ENCODE measurements at regions of chr2 and their contacts with region 1.

Region 1: GRCh38 chr2:84649487-84650142 is 133.3 kb downstream of the DNAH6 start:
- DNase-seq: no peak
- ATAC-seq: no peak
- H3K4me3 ChIP-seq: no peak overlapping the region
- H3K27ac ChIP-seq: no peak overlapping the region
- H3K4me1 ChIP-seq: no peaks in the 10 kb centered on the region
- H3K27me3 ChIP-seq: peaks cover 5% of the 10 kb centered on the region
- CTCF ChIP-seq: no peak

Region 2: GRCh38 chr2:84556190-84556589 is 93.4 kb before region 1 on chr2:
- CTCF ChIA-PET with region 1: no interaction called
- POLR2A ChIA-PET with region 1: no interaction called
- in situ Hi-C with region 1: no loop called
- intact Hi-C with region 1: no loop called
- DNase-seq: no peak
- ATAC-seq: no peak
- H3K4me3 ChIP-seq: no peak overlapping the region
- H3K27ac ChIP-seq: no peak overlapping the region
- H3K4me1 ChIP-seq: no peaks in the 10 kb centered on the region
- H3K27me3 ChIP-seq: no peaks in the 10 kb centered on the region
- CTCF ChIP-seq: no peak

Region 3: DNA sequence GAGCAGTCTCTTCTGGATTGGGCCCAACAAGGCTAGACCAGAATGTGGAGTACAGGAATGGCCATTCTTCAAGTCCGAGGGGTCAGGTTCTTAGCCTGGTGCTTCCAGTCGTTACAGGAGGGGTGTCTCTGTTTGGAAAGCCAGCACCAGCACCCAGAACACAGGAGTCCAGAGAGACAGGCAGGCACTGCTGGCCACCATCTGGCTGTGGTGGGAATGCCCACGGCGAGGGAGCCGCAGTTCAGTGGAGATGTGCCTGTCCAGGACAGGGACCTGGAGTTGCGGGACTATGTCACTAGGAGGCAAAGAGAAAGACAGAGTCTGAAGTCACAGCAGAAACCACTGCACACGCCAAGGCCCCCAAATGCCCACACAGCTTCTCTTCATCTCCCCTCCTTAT is 172.2 kb after region 1 on chr2:
- CTCF ChIA-PET with region 1: no interaction called
- POLR2A ChIA-PET with region 1: no interaction called
- in situ Hi-C with region 1: no loop called
- intact Hi-C with region 1: no loop called
- DNase-seq: no peak
- ATAC-seq: peak; percentile 12; the same call in 1 of the 2 replicates
- H3K4me3 ChIP-seq: no peak overlapping the region
- H3K27ac ChIP-seq: no peak overlapping the region
- H3K4me1 ChIP-seq: no peaks in the 10 kb centered on the region
- H3K27me3 ChIP-seq: no peaks in the 10 kb centered on the region
- CTCF ChIP-seq: no peak

Region 4: DNA sequence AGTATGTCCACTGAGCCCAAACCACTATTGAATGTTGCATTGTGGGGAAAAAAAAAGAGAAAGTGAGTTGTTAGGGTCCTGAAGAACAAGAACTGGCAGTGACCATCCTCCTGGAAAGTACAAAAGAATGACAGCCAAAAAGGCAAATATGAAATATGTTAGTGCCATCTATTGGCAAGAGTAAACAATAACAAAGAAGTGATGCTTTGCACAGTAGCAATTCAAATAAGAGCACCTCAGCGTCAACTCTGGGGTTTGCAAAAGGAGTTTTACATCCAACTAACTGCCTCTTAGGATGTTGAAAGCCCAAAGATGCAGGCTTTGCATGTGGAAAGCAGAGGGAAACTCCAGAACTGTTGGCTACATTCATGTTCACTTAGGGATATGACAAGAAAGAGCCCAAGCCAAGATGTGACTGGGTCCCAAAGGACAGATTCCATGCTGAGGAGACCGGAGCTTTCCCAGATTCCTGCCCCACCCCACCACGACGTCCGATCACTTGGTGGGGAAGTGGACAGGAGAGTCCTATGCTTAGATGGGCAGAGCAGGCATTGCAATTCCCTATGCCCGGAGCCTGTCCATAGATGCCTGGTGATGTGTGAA is 215.7 kb after region 1 on chr2:
- CTCF ChIA-PET with region 1: no interaction called
- POLR2A ChIA-PET with region 1: no interaction called
- in situ Hi-C with region 1: no loop called
- intact Hi-C with region 1: loop called (anchors 10 kb)
- DNase-seq: no peak
- ATAC-seq: peak; percentile 65
- H3K4me3 ChIP-seq: no peak overlapping the region
- H3K27ac ChIP-seq: no peak overlapping the region
- H3K4me1 ChIP-seq: no peaks in the 10 kb centered on the region
- H3K27me3 ChIP-seq: peaks cover 4% of the 10 kb centered on the region; the same call in 1 of the 2 replicates
- CTCF ChIP-seq: peak; percentile 63